Common myeloid progenitor, CD34-positive (primary cell): ENCODE measurements at regions of chr15 and their contacts with region 1.

Region 1: GRCh38 chr15:70466895-70467529 is 296.3 kb downstream of the UACA start:
- DNase-seq: peak; percentile 65 to 74 (median 69)
- H3K4me3 ChIP-seq: no peak overlapping the region
- H3K27ac ChIP-seq: no peak overlapping the region
- H3K4me1 ChIP-seq: peaks cover 5 to 48% (median 23%) of the 10 kb centered on the region in 4 experiments
- H3K27me3 ChIP-seq: no peaks in the 10 kb centered on the region

Region 2: DNA sequence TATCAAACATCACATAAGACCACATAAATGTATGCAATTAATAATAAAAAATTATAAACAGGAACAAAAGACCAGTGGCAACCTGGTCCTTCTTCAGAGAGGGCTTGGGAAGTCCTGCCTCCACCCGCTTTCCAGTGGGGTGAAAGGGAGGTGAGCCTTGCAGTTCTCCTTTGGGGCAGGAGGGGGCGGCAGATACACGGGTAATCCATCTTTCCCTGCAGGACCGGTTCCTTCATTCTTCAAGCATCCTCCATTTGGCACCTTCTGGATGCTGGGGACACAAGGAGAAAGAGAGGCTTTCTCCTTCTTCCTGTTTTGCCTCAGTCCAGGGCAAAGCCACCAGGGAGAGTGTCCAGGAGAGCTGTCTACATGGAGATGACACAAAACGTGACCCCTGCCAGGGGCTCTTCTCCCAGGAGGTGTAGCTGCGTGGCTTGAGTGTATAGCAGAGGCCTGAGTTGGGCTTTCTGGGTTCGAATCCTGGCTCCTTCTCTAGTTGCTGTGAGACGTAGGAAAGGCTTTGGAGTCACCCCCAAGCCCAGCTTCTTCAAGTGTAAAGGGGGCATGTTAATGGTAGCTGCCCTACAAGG is 991.1 kb before region 1 on chr15:
- CTCF ChIA-PET with region 1: interaction called, 10 read pairs
- POLR2A ChIA-PET with region 1: no interaction called
- DNase-seq: peak; percentile 58 to 77 (median 69)
- H3K4me3 ChIP-seq: no peak overlapping the region
- H3K27ac ChIP-seq: no peak overlapping the region
- H3K4me1 ChIP-seq: peaks cover 0 to 15% (median 8%) of the 10 kb centered on the region in 4 experiments
- H3K27me3 ChIP-seq: peaks cover 0 to 2% (median 0%) of the 10 kb centered on the region in 5 experiments

Region 3: DNA sequence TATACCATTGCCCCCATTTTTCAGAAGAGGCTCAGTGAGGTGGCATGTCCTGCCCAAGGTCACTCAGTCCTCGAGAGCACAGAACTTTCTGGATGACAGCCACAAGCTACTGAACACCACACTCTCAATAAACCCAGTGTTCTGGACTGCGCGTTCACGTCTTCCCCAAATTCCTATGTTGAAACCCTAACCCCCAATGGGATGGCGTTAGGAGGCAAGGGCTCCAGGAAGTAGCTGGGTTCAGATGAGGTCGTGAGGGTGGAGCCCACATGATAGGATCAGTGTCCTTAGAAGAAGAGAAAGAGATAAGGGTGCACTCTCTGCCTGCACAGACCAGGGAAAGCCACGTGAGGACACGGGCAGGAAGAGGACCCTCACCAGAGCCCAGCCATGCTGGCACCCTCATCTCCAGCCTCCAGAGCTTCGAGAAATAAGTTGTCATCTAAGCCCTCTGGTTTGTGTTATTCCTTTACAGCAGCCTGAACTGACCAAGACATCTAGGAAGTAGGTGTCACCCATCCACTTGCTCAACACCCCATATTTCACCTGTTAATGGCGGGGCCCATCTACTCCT is 27.6 kb before region 1 on chr15:
- CTCF ChIA-PET with region 1: interaction called, 10 read pairs
- POLR2A ChIA-PET with region 1: no interaction called
- DNase-seq: no peak
- H3K4me3 ChIP-seq: no peak overlapping the region
- H3K27ac ChIP-seq: peak overlapping the region in 1 of 2 experiments; percentile 25
- H3K4me1 ChIP-seq: peaks cover 12 to 50% (median 27%) of the 10 kb centered on the region in 4 experiments
- H3K27me3 ChIP-seq: no peaks in the 10 kb centered on the region

Region 4: GRCh38 chr15:70451821-70452653 is 15.0 kb before region 1 on chr15:
- CTCF ChIA-PET with region 1: interaction called, 28 read pairs
- POLR2A ChIA-PET with region 1: no interaction called
- DNase-seq: no peak
- H3K4me3 ChIP-seq: no peak overlapping the region
- H3K27ac ChIP-seq: no peak overlapping the region
- H3K4me1 ChIP-seq: peaks cover 2 to 49% (median 38%) of the 10 kb centered on the region in 4 experiments
- H3K27me3 ChIP-seq: no peaks in the 10 kb centered on the region

Region 5: GRCh38 chr15:70488002-70488605 is 21.1 kb after region 1 on chr15:
- CTCF ChIA-PET with region 1: interaction called, 95 read pairs
- POLR2A ChIA-PET with region 1: interaction called, 3 read pairs
- DNase-seq: peak; percentile 72 to 83 (median 72)
- H3K4me3 ChIP-seq: no peak overlapping the region
- H3K27ac ChIP-seq: no peak overlapping the region
- H3K4me1 ChIP-seq: peaks cover 34 to 96% (median 84%) of the 10 kb centered on the region in 4 experiments
- H3K27me3 ChIP-seq: no peaks in the 10 kb centered on the region

Region 6: DNA sequence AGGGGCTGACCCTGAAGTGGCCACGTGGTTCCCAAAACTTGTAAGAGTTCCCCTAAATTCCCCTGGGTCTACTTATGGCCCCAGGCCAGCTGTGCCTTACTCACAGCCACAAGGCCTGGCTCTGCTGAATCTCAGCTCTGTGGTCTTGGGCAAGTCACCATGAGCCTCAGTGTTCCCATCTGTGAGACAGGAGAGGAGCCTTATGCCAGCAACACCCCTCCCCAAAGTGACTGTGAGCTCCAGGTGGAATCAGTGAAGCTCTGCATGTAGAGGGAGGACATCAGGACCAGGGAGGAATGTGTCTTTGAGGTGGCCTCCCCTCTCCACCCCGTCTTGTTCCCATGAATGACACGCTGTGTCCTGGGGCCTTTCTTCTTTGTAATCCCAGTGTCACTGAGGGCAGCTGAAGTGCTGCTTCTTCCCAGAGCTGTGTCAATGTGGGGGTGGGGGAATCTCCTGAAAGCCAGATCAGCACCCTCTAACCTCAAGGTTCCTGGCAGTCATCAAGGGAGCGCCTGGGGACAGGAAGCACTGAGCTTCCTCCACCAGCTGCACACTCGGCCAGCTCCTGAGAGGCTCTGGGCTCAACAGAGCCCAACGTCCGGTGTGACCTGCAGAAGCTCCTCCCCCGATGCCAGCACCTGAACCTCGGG is 37.4 kb after region 1 on chr15:
- CTCF ChIA-PET with region 1: interaction called, 16 read pairs
- POLR2A ChIA-PET with region 1: interaction called, 3 read pairs
- DNase-seq: peak in 2 of 3 donors; percentile 82
- H3K4me3 ChIP-seq: peak overlapping the region in 3 of 7 experiments; percentile 34 to 52 (median 41)
- H3K27ac ChIP-seq: no peak overlapping the region
- H3K4me1 ChIP-seq: peaks cover 33 to 100% (median 90%) of the 10 kb centered on the region in 4 experiments
- H3K27me3 ChIP-seq: no peaks in the 10 kb centered on the region

Region 7: GRCh38 chr15:70512772-70513362 is 45.9 kb after region 1 on chr15:
- CTCF ChIA-PET with region 1: interaction called, 16 read pairs
- POLR2A ChIA-PET with region 1: no interaction called
- DNase-seq: peak; percentile 81 to 86 (median 83)
- H3K4me3 ChIP-seq: no peak overlapping the region
- H3K27ac ChIP-seq: no peak overlapping the region
- H3K4me1 ChIP-seq: peaks cover 7 to 59% (median 38%) of the 10 kb centered on the region in 4 experiments
- H3K27me3 ChIP-seq: no peaks in the 10 kb centered on the region